ENCODE measurements at regions of chr16 and their contacts with region 1.

Region 1: DNA sequence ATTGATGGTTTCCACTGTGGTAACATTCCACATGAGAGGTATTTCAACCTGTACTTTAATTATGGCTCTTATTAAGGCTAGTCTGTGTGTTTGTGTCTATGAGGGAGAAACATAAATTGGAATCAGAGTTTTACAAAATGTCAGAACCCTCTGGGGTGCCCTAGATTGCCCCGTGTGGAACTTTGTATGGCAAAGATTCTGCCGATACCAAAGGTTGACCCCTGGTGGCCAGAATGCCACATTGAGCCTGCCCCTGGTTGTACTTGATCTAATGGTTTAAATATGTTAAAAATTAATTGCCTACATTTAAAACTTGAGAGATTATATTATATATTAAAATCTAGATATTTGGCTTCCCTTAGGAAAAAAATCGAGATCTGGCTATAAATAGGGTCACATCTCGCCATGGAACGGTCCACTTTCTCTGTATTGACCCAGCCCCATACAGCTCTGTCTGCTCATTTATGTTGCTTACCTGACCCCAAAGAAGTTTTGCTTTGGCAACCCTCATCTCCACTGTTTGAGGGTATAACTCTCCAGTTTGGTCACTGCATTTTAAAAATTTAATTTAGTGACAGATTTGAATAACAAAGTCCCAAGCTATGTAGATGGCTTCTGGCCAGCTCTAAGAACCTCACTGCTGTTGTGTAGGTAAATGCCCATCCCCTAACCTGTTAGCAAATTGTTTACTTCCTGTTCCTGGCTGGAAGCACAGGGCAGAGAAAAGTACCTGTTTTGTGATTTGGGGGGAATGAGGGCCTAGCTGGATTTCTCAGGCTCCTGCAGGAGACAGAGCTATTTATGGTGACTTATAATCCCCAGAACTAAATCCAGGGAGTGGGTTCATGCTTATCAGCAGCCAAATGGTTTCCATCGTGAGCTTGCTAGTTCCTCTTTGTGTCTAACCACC is 95.0 kb downstream of the PLCG2 start:
- DNase-seq: peak; percentile 71
- H3K4me3 Mint-ChIP-seq: no peak overlapping the region
- H3K27ac Mint-ChIP-seq: no peak overlapping the region
- H3K4me1 Mint-ChIP-seq: peaks cover 14% of the 10 kb centered on the region
- H3K27me3 Mint-ChIP-seq: peaks cover 7% of the 10 kb centered on the region

Region 2: GRCh38 chr16:81686391-81687130 is 187.5 kb before region 1 on chr16:
- CTCF ChIA-PET with region 1: no interaction called
- DNase-seq: no peak
- H3K4me3 Mint-ChIP-seq: no peak overlapping the region
- H3K27ac Mint-ChIP-seq: no peak overlapping the region
- H3K4me1 Mint-ChIP-seq: peaks cover 8% of the 10 kb centered on the region
- H3K27me3 Mint-ChIP-seq: no peaks in the 10 kb centered on the region

Region 3: DNA sequence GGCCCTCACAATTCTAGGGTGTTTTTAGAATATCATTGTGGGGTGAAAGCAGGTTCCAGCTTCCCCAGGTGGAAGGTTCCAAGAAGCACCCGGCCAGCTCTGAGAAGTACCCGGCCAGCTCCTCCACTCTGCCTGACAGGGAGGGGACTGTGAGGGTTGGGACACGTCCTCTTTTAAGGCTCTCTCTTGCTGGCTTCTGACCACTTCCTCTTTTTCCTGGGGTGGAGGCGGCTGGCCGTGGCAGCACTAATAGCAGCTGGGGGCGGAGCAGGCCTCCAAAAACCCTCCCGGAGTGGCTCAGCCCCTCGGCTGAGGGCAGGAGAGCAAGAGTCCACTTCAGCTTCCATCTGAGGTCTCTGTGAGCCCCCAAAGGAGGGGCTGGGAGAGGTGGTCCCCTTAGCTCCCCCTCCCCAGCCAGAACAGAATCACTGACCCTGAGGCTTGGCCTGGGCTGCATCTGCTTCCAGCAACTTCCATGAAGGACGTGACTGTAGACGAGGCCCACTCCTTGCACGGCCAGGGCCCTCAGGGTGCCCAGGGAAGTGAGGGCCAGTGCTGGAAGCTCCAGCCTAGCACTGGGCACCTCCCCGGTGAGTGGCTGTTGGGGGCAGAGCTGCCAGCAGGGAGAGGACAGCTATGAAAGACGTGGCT is 121.7 kb before region 1 on chr16:
- CTCF ChIA-PET with region 1: interaction called, 17 read pairs
- DNase-seq: no peak
- H3K4me3 Mint-ChIP-seq: no peak overlapping the region
- H3K27ac Mint-ChIP-seq: no peak overlapping the region
- H3K4me1 Mint-ChIP-seq: peaks cover 23% of the 10 kb centered on the region
- H3K27me3 Mint-ChIP-seq: peaks cover 19% of the 10 kb centered on the region

Region 4: GRCh38 chr16:81778861-81779535 is 95.1 kb before region 1 on chr16 and contains the start of gene PLCG2:
- CTCF ChIA-PET with region 1: interaction called, 15 read pairs
- DNase-seq: peak; percentile 82
- H3K4me3 Mint-ChIP-seq: peak within 1 kb of the TSS; percentile 73
- H3K27ac Mint-ChIP-seq: no peak within 1 kb of the TSS
- H3K4me1 Mint-ChIP-seq: peaks cover 10% of the 10 kb centered on the region
- H3K27me3 Mint-ChIP-seq: peaks cover 85% of the 10 kb centered on the region

Region 5: GRCh38 chr16:81798311-81799137 is 75.6 kb before region 1 on chr16:
- CTCF ChIA-PET with region 1: interaction called, 16 read pairs
- DNase-seq: peak; percentile 31
- H3K4me3 Mint-ChIP-seq: peak overlapping the region; percentile 25
- H3K27ac Mint-ChIP-seq: peak overlapping the region; percentile 71
- H3K4me1 Mint-ChIP-seq: peaks cover 22% of the 10 kb centered on the region
- H3K27me3 Mint-ChIP-seq: no peaks in the 10 kb centered on the region

Region 6: GRCh38 chr16:81855552-81856153 is 18.4 kb before region 1 on chr16:
- CTCF ChIA-PET with region 1: interaction called, 11 read pairs
- DNase-seq: no peak
- H3K4me3 Mint-ChIP-seq: no peak overlapping the region
- H3K27ac Mint-ChIP-seq: no peak overlapping the region
- H3K4me1 Mint-ChIP-seq: peaks cover 3% of the 10 kb centered on the region
- H3K27me3 Mint-ChIP-seq: peaks cover 5% of the 10 kb centered on the region

Region 7: GRCh38 chr16:81861503-81861902 is 12.6 kb before region 1 on chr16:
- CTCF ChIA-PET with region 1: interaction called, 11 read pairs
- DNase-seq: no peak
- H3K4me3 Mint-ChIP-seq: no peak overlapping the region
- H3K27ac Mint-ChIP-seq: no peak overlapping the region
- H3K4me1 Mint-ChIP-seq: peaks cover 10% of the 10 kb centered on the region
- H3K27me3 Mint-ChIP-seq: peaks cover 14% of the 10 kb centered on the region

Region 8: DNA sequence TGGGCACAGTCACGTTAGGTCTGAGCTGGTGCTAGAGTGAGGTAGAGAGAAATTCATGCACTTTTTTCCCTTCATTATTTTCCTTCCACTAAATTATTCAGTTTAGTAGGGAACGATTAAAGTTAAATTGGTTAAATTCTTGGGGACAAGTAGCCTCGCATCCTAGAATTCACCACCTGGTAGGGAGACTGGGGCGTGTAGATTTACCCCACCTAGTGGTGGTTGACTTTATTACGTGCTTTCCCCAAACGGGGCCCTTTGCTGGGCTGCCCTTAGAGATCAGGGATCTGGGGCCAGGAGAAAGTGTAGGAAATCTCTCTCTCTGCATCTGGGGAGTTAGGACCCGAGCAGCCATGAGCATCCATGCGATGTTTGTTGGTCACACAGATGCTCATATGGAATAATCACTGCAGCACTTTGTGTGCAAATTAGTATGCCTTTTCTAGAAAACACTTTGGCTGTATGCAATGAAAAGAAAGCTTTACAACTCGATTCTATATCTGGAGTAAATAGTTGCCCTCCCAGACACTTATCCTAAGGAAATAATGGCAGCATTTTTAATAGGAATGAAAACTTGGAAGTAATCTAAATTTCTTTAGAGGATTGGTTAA is 12.0 kb after region 1 on chr16:
- CTCF ChIA-PET with region 1: interaction called, 29 read pairs
- DNase-seq: peak; percentile 33
- H3K4me3 Mint-ChIP-seq: no peak overlapping the region
- H3K27ac Mint-ChIP-seq: no peak overlapping the region
- H3K4me1 Mint-ChIP-seq: no peaks in the 10 kb centered on the region
- H3K27me3 Mint-ChIP-seq: no peaks in the 10 kb centered on the region